ENCODE measurements at regions of chr14 and their contacts with region 1.

Region 1: DNA sequence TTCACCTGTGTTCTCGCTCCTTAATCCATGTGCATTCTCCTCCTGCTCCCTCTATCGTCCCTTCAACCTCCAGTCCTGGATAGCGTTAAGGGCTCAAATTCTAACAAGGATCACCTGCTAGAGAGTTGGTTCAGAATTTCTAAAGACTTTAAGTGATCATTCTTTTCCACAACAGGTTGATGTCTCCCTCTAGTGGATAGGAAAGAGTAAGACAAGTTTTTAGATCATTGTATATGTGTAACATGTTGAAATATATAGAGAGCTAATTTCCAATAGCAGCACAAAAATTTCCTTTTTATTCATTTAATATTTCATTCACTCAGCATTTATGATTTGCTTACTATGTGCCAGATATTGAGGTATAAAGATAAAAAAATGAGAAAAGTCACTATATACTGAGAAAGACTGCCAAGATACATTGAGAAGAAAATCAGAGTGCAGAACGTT is 9.3 kb upstream of the ESR2 start:
- DNase-seq: no peak
- H3K4me3 ChIP-seq: no peak overlapping the region
- CTCF ChIP-seq: peak; percentile 58

Region 2: GRCh38 chr14:63800651-63801375 is 502.7 kb before region 1 on chr14:
- CTCF ChIA-PET with region 1: interaction called, 68 read pairs
- POLR2A ChIA-PET with region 1: no interaction called
- DNase-seq: no peak
- H3K4me3 ChIP-seq: no peak overlapping the region
- CTCF ChIP-seq: no peak

Region 3: DNA sequence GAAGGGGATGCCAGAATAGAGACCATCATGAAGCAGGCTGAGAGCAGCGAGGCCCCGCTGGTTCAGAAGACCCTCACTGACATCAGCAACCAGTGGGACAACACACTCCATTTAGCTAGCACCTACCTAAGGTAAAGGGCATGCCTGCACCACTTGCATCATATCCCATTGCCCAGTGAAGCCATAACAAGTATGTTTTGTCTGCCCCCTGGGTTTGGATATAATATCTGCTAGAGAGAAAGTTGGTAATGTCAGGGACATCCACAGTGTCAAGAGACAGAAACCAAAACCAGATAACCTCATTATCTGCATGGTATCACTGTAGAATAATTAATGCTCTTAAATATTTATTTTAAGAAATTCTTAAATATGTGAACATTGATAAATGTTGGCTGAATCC is 276.9 kb before region 1 on chr14:
- CTCF ChIA-PET with region 1: interaction called, 17 read pairs
- POLR2A ChIA-PET with region 1: no interaction called
- DNase-seq: no peak
- H3K4me3 ChIP-seq: no peak overlapping the region
- CTCF ChIP-seq: no peak

Region 4: DNA sequence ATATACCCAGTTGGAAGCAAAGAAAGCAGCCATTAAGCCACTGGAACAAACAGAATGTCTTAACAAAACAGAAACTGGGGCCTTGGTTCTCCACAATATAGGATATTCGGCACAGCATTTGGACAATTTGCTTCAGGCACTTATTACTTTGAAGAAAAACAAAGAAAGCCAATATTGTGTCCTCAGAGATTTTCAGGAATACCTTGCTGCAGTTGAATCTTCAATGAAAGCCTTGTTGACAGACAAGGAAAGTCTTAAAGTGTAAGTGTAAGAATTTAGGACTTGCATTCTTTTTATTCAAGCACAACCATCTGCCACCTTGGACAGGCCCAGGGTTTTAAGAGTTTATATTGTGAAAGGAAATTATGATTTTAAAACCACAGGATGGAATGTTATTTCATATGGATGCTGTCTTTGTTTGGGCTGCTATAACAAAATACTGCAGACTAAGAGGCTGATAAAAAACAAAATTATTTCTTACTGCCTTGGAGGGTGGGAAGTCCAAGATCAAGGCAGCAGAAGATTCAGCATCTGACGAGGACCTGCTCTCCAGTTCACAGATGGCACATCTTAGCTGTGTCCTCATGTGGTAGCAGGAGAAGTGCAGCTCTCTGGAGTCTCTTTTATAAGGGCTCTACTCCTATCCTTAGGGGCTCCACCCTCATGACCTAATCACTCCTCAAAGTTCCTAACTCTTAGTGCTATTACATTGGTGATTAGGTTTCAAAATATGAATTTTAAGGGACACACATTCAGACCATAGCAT is 253.7 kb before region 1 on chr14:
- CTCF ChIA-PET with region 1: interaction called, 10 read pairs
- POLR2A ChIA-PET with region 1: no interaction called
- DNase-seq: no peak
- H3K4me3 ChIP-seq: no peak overlapping the region
- CTCF ChIP-seq: no peak

Region 5: GRCh38 chr14:64137657-64138290 is 165.7 kb before region 1 on chr14:
- CTCF ChIA-PET with region 1: interaction called, 26 read pairs
- POLR2A ChIA-PET with region 1: no interaction called
- DNase-seq: no peak
- H3K4me3 ChIP-seq: no peak overlapping the region
- CTCF ChIP-seq: peak; percentile 28

Region 6: GRCh38 chr14:64478634-64479250 is 175.2 kb after region 1 on chr14:
- CTCF ChIA-PET with region 1: interaction called, 15 read pairs
- POLR2A ChIA-PET with region 1: no interaction called
- DNase-seq: no peak
- H3K4me3 ChIP-seq: no peak overlapping the region
- CTCF ChIP-seq: no peak

Measured in AG04449 (cell line).